ENCODE measurements at regions of chr13 and their contacts with region 1.

Region 1: DNA sequence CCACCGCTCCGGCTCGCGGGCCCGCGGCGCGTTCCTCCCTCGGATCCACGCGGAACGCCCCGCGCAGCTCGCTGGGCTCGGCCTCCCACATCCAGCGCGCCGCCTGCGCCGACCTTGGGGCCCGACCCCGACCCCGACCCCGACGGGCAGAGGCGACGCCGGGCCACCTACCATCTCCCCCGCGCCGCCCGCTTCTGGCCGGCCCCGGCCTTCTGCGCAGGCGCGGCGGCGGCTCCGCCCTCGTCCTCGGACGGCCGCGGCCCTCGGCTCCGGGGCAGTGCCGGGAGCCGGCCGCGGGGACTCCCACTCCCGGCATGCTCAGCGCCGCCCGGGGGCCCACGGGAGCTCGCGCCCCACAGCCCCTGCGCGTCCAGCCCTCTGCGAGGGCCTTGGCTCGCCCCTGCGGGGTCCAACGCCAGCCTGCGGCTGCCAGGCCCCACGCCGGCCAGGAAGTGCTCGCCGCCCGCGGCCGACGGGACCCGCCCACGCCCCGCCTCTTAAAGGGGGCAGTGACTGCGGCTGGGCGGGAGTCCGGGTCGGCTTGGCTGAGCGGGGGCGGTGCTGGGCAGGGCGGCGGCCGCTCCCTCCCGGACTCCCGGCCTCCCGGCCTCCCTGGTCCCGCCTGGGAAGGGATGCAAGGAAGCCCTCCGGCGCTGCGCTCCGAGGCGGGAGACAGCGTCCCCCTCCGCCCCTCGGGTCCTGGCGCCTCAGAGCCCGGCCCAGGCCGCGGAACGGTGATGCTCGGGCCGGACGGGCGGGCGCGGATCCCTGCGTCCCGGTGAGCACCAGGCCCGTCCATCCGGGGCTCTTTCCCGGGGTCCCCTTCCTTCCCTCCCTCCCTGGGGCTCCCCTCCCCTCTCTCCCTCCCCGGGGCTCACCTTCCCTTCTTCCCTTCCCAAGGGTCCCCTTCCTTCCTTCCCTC is at the start of gene DCUN1D2:
- DNase-seq: peak; percentile 78
- H3K4me3 Mint-ChIP-seq: peak within 1 kb of the TSS; percentile 93
- H3K27ac Mint-ChIP-seq: peak within 1 kb of the TSS; percentile 79
- H3K4me1 Mint-ChIP-seq: peaks cover 50% of the 10 kb centered on the region
- H3K27me3 Mint-ChIP-seq: no peaks in the 10 kb centered on the region
- total RNA-seq, gene DCUN1D2: 22.2 and 25.5 TPM in 2 replicates

Region 2: DNA sequence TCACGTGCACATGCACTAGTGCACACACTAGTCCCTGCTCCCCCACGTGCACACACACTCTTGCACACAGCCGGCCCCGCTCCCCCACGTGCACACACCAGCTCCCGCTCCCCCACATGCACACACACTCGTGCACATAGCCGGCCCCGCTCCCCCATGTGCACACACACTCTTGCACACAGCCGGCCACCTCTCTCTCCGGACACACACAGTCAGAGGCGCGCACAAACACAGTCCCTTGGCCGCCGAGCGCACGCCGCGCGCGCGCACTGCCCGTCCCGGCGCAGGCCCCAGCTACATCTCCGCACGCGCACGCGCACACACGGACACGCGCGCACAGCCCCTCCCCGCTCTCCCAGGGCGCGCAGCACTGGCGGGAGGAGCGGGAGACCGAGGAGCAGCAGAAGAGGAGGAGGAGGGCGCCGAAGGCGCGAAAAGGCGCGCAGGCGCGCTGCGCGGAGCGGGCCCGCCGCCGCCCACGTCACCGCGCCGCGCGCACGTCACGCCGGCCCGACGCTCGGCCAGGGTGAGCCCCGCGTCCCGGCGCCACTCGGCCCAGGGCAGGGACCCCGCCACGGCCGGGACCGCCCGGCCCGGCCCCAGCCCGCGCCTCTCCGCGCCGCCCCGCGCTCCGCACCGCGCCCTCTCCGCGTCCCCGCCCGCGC is 93.6 kb after region 1 on chr13 and contains the start of gene TFDP1:
- intact Hi-C with region 1: loop called (anchors 2 kb)
- DNase-seq: peak; percentile 90
- H3K4me3 Mint-ChIP-seq: peak within 1 kb of the TSS; percentile 88
- H3K27ac Mint-ChIP-seq: peak within 1 kb of the TSS; percentile 88
- H3K4me1 Mint-ChIP-seq: peaks cover 31% of the 10 kb centered on the region
- H3K27me3 Mint-ChIP-seq: no peaks in the 10 kb centered on the region
- total RNA-seq, gene TFDP1: 164 and 177 TPM in 2 replicates